ENCODE measurements at regions of chr19 and their contacts with region 1.

Region 1: GRCh38 chr19:3429581-3430080 is 50.7 kb downstream of the SMIM24 start:
- DNase-seq: no peak
- H3K4me3 ChIP-seq: no peak overlapping the region
- CTCF ChIP-seq: peak; percentile 91

Region 2: GRCh38 chr19:3324321-3324856 is 105.2 kb before region 1 on chr19:
- CTCF ChIA-PET with region 1: interaction called, 57 read pairs
- POLR2A ChIA-PET with region 1: no interaction called
- DNase-seq: no peak
- H3K4me3 ChIP-seq: no peak overlapping the region
- CTCF ChIP-seq: peak; percentile 78

Region 3: GRCh38 chr19:3346677-3347353 is 82.8 kb before region 1 on chr19:
- CTCF ChIA-PET with region 1: interaction called, 11 read pairs
- POLR2A ChIA-PET with region 1: no interaction called
- DNase-seq: no peak
- H3K4me3 ChIP-seq: no peak overlapping the region
- CTCF ChIP-seq: no peak

Region 4: GRCh38 chr19:3398114-3398899 is 31.3 kb before region 1 on chr19:
- CTCF ChIA-PET with region 1: interaction called, 10 read pairs
- POLR2A ChIA-PET with region 1: no interaction called
- DNase-seq: no peak
- H3K4me3 ChIP-seq: no peak overlapping the region
- CTCF ChIP-seq: no peak

Region 5: DNA sequence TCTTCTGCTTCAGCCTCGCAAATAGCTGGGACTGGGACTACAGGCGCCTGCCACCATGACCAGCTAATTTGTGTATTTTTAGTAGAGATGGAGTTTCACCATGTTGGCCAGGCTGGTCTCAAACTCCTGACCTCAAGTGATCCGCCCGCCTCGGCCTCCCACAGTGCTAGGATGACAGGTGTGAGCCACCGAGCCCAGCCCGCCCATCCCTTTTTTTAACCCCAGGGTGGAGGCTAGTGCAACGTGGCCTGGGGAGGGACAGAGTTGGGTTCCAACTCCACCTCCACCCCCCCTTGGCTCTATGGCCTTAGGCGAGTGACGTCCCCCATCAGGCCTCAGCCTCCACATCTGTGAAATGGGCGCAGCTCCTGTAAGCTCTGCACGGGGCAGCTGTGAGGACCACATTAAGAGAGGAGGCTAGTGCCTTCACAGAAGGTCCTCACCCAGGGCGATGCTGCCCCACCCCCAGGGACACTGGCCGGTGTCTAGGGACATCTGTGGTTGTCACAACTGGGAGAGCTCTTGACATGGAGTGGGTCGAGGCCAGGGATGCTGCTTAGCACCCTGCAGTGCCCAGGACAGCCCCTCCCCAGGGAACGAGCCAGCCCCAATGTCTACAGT is 13.0 kb after region 1 on chr19:
- CTCF ChIA-PET with region 1: interaction called, 21 read pairs
- POLR2A ChIA-PET with region 1: interaction called, 3 read pairs
- DNase-seq: no peak
- H3K4me3 ChIP-seq: no peak overlapping the region
- CTCF ChIP-seq: no peak

Region 6: GRCh38 chr19:3494051-3494450 is 64.4 kb after region 1 on chr19:
- CTCF ChIA-PET with region 1: no interaction called
- POLR2A ChIA-PET with region 1: no interaction called
- DNase-seq: no peak
- H3K4me3 ChIP-seq: no peak overlapping the region
- CTCF ChIP-seq: no peak

Region 7: DNA sequence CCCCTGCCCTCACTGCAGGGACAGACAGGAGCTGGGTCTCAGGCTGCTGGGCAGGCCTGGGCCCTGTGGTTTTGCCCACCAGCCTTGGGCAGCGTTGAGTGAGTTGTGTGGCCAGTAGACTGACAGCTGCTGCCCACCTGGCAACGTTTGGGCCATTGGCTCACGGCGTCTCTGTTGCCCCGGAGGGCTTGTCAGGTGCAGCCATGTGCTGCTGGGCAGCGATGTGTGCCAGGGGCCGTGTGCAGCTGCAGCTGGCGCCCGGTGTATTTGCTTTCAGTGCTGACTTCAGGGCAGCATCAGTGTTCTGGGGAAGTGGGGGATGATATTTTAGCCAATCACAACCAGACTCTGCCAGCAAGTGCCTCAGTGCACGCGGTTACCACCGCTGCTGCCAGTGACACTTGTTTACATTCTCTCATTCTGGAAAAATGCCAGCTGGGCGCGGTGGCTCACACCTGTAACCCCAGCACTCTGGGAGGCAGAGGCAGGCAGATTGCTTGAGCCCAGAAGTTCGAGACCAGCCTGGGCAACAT is 87.1 kb after region 1 on chr19:
- CTCF ChIA-PET with region 1: no interaction called
- POLR2A ChIA-PET with region 1: no interaction called
- DNase-seq: no peak
- H3K4me3 ChIP-seq: no peak overlapping the region
- CTCF ChIP-seq: no peak

Measured in AG04449 (cell line).